Right ventricle myocardium superior (tissue), 1 donor: ENCODE measurements at regions of chr5 and their contacts with region 1.

Region 1: DNA sequence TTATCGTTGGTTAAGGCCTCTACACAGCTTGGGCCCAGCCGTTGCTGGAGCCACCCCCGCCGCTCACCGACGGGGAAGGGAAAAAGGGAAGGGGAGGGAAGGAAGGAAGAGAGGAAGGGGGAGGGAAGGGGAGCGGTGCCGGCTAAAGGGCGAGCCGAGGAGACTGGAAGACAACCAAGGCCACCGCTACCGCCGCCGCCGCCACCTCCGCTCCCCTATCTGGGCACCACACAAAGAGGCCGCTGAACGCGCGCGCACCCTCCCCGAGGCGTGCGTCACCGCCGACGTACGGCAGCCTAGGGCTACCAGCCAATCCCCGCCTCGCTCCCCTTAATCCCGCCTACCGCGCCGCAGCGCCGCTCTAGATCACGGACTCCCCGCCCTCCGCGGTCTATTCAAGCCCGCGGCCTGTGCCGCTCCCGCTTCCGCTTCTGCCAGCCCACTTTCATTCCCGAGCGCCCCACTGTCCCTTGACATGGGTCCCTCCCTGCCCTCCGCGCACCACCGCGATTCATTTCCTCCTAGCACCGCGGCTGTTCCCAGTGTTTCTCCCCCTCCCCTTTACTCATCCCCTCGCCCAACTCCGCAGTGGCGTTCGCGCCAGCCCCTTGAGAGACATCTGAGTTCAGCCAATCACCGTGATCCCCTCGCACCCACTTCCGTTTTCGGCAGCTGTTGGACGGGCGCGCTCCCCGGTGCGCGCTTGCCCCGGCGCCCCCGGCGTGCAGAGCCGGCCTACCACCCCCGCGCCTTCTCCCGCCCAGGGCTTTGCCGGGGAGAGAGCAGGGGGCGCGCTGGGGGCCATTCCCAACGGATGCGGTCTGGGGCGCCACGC is at the start of gene HNRNPA0:
- DNase-seq: peak; percentile 99
- ATAC-seq: peak; percentile 95
- total RNA-seq, gene HNRNPA0: 12.1 TPM

Region 2: GRCh38 chr5:138138949-138139780 is 384.8 kb after region 1 on chr5 and contains the start of gene NME5:
- intact Hi-C with region 1: loop called (anchors 10 kb)
- DNase-seq: peak; percentile 75
- ATAC-seq: peak; percentile 96
- total RNA-seq, gene NME5: 4.9 TPM